ENCODE measurements at regions of chr10 and their contacts with region 1.

Region 1: GRCh38 chr10:133144771-133145170 is 15.2 kb upstream of the KNDC1 start:
- DNase-seq: peak in 1 of 2 experiments; percentile 35
- H3K4me3 ChIP-seq: no peak overlapping the region
- H3K4me3 Mint-ChIP-seq: peak overlapping the region; percentile 75
- H3K27ac Mint-ChIP-seq: peak overlapping the region; percentile 4
- H3K4me1 ChIP-seq: peaks cover 37% of the 10 kb centered on the region
- H3K4me1 Mint-ChIP-seq: peaks cover 16% of the 10 kb centered on the region
- H3K27me3 ChIP-seq: no peaks in the 10 kb centered on the region
- H3K27me3 Mint-ChIP-seq: no peaks in the 10 kb centered on the region
- CTCF ChIP-seq: no peak

Region 2: DNA sequence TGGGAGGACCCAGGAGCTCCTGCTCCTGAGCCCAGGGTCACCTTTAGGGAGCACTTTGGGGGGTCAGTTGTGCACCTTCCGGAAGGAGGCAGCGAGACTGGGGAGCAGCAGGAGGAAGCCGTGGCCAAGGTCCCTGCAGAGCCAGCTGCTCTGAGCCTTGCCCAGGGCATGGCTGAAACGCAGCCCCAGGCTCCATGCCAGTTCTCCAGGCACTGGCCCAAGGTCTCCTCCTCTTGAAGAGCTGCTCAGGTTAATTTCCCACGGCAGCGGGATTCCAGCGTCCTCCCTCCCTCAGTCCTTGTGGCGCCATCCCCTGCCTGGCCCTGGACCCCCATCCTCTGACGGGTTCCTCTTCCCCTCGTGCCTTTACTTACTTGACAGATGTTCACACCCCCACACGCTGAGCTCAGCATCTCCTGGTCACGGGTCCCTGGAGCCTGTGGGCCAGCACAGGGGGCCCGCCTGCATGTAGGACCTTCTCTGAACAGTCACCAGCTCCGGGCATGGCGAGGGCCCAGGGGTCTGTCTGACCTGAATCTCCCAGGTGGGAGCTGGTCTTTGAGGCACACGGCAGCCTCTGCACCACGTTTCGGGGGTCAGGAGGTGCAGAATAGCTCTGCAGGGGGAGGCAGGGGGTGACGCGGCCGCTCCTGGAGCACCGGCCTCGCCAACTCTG is 185.8 kb before region 1 on chr10:
- CTCF ChIA-PET with region 1: no interaction called
- POLR2A ChIA-PET with region 1: no interaction called
- intact Hi-C with region 1: no loop called
- DNase-seq: peak in 1 of 2 experiments; percentile 31
- H3K4me3 ChIP-seq: no peak overlapping the region
- H3K4me3 Mint-ChIP-seq: no peak overlapping the region
- H3K27ac Mint-ChIP-seq: no peak overlapping the region
- H3K4me1 ChIP-seq: peaks cover 13% of the 10 kb centered on the region
- H3K4me1 Mint-ChIP-seq: no peaks in the 10 kb centered on the region
- H3K27me3 ChIP-seq: no peaks in the 10 kb centered on the region
- H3K27me3 Mint-ChIP-seq: peaks cover 16% of the 10 kb centered on the region
- CTCF ChIP-seq: no peak

Region 3: GRCh38 chr10:133167693-133168616 is 23.2 kb after region 1 on chr10:
- CTCF ChIA-PET with region 1: no interaction called
- POLR2A ChIA-PET with region 1: no interaction called
- intact Hi-C with region 1: no loop called
- DNase-seq: peak in 1 of 2 experiments; percentile 30
- H3K4me3 ChIP-seq: no peak overlapping the region
- H3K4me3 Mint-ChIP-seq: no peak overlapping the region
- H3K27ac Mint-ChIP-seq: no peak overlapping the region
- H3K4me1 ChIP-seq: peaks cover 13% of the 10 kb centered on the region
- H3K4me1 Mint-ChIP-seq: no peaks in the 10 kb centered on the region
- H3K27me3 ChIP-seq: no peaks in the 10 kb centered on the region
- H3K27me3 Mint-ChIP-seq: peaks cover under 1% of the 10 kb centered on the region
- CTCF ChIP-seq: no peak

Region 4: DNA sequence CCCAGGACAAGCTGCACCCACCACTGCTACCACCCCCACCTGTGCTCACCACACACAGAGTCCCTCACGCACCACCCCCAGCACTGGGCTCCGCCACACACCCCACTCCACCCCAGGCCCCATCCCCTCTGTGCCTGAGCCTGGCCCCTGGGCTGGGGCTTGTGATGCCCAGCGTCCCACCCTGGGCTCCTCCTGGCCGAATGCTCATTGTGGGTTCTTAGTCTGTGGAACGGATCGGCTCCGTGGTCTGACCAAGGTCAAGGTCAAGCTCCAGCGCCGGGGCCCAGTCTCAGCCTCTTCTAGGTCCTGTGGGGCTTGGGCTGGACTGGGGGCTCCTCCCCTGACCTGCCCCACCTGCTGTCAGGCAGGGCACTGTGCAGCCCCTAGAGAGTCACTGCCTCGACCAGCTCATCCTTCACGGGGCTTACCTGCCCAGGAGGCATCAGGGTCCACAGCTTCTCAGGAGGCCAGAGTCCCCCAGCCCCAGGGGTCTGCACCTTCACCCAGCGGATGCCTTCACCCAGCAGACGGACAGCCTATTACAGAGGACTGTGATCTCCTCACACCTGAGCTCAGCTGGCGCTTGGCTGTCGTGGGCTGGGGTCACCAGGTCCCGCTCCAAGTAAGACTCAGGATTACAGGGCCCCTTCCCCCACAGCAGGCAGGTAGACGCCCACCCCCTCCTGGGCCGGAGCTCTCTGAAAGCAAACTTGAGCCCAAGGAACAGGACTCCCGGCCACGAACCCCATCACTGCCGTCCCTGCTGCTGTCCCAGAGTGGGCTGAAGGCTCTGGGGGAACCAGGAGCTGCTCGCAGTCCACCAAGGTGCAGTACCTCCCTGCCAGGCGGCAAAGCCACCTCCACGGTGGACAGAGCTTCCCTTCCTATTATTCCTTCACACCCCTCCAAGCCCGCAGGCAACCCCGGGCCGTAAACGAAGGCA is 70.0 kb after region 1 on chr10:
- CTCF ChIA-PET with region 1: no interaction called
- POLR2A ChIA-PET with region 1: no interaction called
- intact Hi-C with region 1: loop called (anchors 1 kb)
- DNase-seq: no peak
- H3K4me3 ChIP-seq: no peak overlapping the region
- H3K4me3 Mint-ChIP-seq: no peak overlapping the region
- H3K27ac Mint-ChIP-seq: no peak overlapping the region
- H3K4me1 ChIP-seq: no peaks in the 10 kb centered on the region
- H3K4me1 Mint-ChIP-seq: no peaks in the 10 kb centered on the region
- H3K27me3 ChIP-seq: peaks cover 3% of the 10 kb centered on the region; the same call in 1 of the 2 replicates
- H3K27me3 Mint-ChIP-seq: peaks cover 20% of the 10 kb centered on the region
- CTCF ChIP-seq: no peak

Region 5: GRCh38 chr10:133226251-133226808 is 81.6 kb after region 1 on chr10:
- CTCF ChIA-PET with region 1: interaction called, 7 read pairs
- POLR2A ChIA-PET with region 1: no interaction called
- intact Hi-C with region 1: loop called (anchors 1 kb)
- DNase-seq: peak in 1 of 2 experiments; percentile 57
- H3K4me3 ChIP-seq: no peak overlapping the region
- H3K4me3 Mint-ChIP-seq: no peak overlapping the region
- H3K27ac Mint-ChIP-seq: no peak overlapping the region
- H3K4me1 ChIP-seq: no peaks in the 10 kb centered on the region
- H3K4me1 Mint-ChIP-seq: no peaks in the 10 kb centered on the region
- H3K27me3 ChIP-seq: no peaks in the 10 kb centered on the region
- H3K27me3 Mint-ChIP-seq: peaks cover 13% of the 10 kb centered on the region
- CTCF ChIP-seq: peak in 1 of 2 experiments; percentile 16